ENCODE measurements at regions of chr5 and their contacts with region 1.

Region 1: GRCh38 chr5:176559683-176560082 is 10.5 kb downstream of the CDHR2 start:
- DNase-seq: peak; percentile 33
- ATAC-seq: no peak
- H3K4me3 ChIP-seq: no peak overlapping the region
- H3K27ac ChIP-seq: no peak overlapping the region
- H3K4me1 ChIP-seq: peaks cover 10% of the 10 kb centered on the region
- H3K27me3 ChIP-seq: no peaks in the 10 kb centered on the region
- CTCF ChIP-seq: peak; percentile 44

Region 2: DNA sequence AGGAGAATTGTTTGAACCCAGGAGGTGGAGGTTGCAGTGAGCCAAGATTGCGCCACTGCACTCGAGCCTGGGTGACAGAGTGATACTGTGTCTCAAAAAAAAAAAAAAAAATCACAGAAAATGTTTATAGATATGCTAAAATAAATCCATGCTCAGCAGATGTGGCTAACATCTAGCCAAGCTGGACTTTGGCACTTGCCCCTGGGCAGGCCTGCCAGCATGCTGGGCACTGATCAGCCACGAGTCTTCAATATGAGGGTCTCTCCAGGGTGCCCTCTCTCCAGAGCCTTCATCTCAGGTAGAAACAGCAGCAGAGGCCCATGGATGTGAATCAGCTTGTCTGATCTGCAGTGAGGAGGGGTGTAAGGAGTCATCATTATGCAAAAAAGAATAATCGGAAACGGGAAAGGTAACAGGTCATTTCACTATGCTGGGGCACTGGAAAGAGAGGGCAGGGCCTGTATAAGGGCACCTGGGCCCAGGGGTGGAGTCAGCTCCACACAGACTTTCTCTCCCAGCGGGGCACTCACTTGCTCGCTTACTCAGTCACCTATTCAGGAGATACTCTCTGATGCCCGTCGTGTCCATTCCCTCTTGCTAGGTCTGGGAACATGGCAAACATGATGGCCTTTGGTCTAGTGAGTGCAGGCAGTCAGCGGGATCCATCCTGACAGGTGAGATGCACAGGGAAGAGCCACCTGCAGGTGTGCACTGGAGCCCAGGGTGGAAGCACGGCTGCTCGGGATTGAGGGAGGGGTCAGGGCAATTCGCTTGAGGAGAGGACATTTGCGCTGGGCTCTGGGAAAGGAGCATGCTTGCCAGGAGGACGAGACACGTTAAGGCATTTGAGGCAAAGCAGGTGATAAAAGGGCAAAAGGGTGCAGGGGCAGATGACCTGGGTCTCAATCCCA is 39.6 kb before region 1 on chr5:
- CTCF ChIA-PET with region 1: no interaction called
- POLR2A ChIA-PET with region 1: interaction called, 10 read pairs
- intact Hi-C with region 1: no loop called
- DNase-seq: no peak
- ATAC-seq: no peak
- H3K4me3 ChIP-seq: no peak overlapping the region
- H3K27ac ChIP-seq: no peak overlapping the region
- H3K4me1 ChIP-seq: no peaks in the 10 kb centered on the region
- H3K27me3 ChIP-seq: no peaks in the 10 kb centered on the region
- CTCF ChIP-seq: no peak

Region 3: DNA sequence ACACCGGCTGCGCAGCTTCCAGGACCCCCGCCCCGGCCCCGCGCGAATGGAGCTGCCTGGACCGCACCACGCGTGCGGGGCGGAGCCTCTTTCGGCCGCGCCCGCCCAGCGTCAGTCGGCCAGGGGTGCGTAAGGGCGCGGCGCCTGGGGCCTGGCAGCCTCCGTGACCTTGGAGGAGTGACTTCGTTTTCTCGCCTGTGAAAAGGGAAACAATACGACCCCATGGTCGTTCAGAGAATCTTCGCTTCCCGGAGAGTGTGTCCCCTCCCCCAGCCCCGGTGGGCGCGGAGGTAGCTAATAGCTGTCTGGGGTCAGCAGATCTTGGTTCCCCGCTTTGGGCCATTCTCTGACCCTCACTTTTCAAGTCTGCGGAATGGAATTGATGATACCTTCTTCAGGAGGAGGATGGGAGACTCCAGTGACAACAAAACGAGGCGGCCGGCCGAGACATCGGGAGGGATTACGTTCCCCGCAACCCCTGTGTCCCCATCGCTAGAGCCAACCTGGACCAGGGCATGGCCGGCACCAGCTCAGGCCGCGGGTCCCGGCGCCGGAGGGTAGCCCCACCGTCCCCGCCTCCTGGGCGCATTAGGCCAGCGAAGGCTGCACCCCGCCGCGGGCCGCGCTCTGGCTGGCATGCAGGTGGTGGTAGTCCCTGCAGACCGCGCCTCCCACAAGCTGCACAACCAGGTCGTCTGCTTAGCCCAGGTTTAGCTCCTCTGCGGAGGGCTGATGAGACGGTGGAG is 16.1 kb before region 1 on chr5:
- CTCF ChIA-PET with region 1: no interaction called
- POLR2A ChIA-PET with region 1: interaction called, 13 read pairs
- intact Hi-C with region 1: loop called (anchors 1 kb)
- DNase-seq: peak; percentile 73
- ATAC-seq: peak; percentile 83
- H3K4me3 ChIP-seq: peak overlapping the region; percentile 80
- H3K27ac ChIP-seq: peak overlapping the region; percentile 75
- H3K4me1 ChIP-seq: peaks cover 53% of the 10 kb centered on the region
- H3K27me3 ChIP-seq: no peaks in the 10 kb centered on the region
- CTCF ChIP-seq: no peak

Region 4: DNA sequence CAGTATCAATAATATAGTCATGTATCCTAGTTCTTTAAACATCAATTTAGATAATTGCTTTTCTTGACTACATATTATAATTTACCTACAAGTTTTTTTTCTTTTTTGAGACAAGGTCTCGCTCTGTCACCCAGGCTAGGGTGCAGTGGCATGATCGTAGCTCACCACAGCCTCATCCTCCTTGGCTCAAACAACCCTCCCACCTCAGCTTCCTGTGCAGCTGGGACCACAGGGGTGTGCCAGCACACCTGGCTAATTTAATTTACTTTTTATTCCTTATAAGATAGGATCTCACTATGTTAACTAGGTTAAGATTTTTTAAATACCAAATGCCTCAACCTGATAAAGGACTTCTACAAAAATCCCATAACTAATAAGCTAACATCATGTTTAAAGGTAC is 425.8 kb after region 1 on chr5:
- CTCF ChIA-PET with region 1: no interaction called
- POLR2A ChIA-PET with region 1: no interaction called
- intact Hi-C with region 1: no loop called
- DNase-seq: no peak
- ATAC-seq: no peak
- H3K4me3 ChIP-seq: no peak overlapping the region
- H3K27ac ChIP-seq: no peak overlapping the region
- H3K4me1 ChIP-seq: no peaks in the 10 kb centered on the region
- H3K27me3 ChIP-seq: no peaks in the 10 kb centered on the region
- CTCF ChIP-seq: no peak

Measured in PC-3 (cell line).